ENCODE measurements at regions of chr10 and their contacts with region 1.

Region 1: DNA sequence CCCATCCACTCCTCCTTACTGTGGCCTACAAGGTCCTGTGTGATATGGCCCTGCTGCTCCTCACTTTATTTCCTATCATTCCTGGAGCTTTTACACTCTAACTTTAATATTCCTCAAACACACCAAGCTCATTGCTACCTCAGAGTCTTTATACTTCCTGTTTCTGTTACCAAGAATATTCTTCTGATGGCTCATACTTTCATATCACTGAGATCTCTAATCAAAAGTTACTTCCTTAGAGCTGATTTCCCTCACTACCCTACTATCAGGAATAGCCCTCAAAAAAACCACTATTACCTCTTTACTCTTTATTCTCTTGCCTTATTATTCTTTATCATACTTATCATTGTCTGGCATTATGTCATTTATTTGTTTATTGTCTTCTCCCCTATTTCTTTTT is 5.8 kb upstream of the PPP3CB start:
- DNase-seq: no peak

Region 2: GRCh38 chr10:73623056-73623455 is 121.4 kb after region 1 on chr10:
- in situ Hi-C with region 1: loop called (anchors 5 kb)
- DNase-seq: peak; percentile 42

Measured in Caki2 (cell line).